Ascending aorta (tissue), 2 donors: ENCODE measurements at regions of chr2 and their contacts with region 1.

Region 1: DNA sequence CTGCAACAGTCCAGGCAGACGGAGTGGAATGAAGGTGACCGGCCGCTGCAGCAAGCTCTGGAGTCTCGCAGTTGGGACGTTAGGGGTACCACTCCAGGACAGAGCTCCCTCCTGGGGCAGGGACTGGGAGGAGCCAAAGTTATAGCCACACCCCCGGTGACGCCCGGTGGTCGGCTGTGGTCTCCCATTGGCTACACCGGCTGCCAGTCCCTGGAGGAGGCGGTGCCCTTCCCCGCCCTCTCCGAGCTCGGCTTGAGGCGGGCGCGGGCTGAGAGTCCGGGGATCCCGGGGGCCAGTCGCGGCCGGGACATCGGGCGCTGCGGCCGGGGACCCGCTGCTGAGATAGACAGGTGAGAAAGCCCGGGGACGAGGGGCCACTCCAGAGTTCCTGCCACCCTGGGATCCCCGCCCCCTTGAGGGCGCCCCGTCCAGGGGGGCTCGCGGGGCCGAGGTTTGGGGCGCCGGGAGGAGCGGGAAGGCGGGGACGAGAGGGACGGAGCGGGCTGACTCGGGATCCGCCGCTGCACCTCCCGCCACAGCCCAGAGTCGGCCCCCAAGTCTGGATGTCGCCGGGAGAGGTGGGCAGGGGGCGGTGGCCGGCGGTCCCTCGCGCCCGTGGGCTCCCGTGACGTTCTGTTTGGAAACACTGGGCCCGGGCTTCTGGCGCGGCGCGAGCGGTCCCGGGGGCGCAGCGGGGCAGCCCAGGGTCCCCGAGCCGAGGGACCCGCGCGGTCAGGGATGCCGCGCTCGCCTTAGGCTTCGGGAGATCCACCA is at the start of gene PLEKHH2:
- DNase-seq: peak; percentile 58 to 95
- H3K4me3 ChIP-seq: peak within 1 kb of the TSS; percentile 94 to 95
- H3K27ac ChIP-seq: peak within 1 kb of the TSS; percentile 74 to 88
- H3K4me1 ChIP-seq: peaks cover 0 to 4% of the 10 kb centered on the region in 2 donors
- H3K27me3 ChIP-seq: no peaks in the 10 kb centered on the region
- CTCF ChIP-seq: no peak
- total RNA-seq, gene PLEKHH2: 15.0 TPM

Region 2: GRCh38 chr2:42886921-42887320 is 750.3 kb before region 1 on chr2:
- intact Hi-C with region 1: no loop called
- DNase-seq: peak in 1 of 2 donors; percentile 62
- H3K4me3 ChIP-seq: no peak overlapping the region
- H3K27ac ChIP-seq: no peak overlapping the region
- H3K4me1 ChIP-seq: peaks cover 2 to 3% of the 10 kb centered on the region in 2 donors
- H3K27me3 ChIP-seq: no peaks in the 10 kb centered on the region
- CTCF ChIP-seq: no peak

Region 3: GRCh38 chr2:43595603-43596412 is 41.4 kb before region 1 on chr2 and contains the start of gene THADA:
- intact Hi-C with region 1: loop called (anchors 2 kb)
- DNase-seq: peak; percentile 97 to 99
- H3K4me3 ChIP-seq: peak within 1 kb of the TSS; percentile 78 to 87
- H3K27ac ChIP-seq: peak within 1 kb of the TSS; percentile 88 to 95
- H3K4me1 ChIP-seq: peaks cover 4 to 12% of the 10 kb centered on the region in 2 donors
- H3K27me3 ChIP-seq: no peaks in the 10 kb centered on the region
- CTCF ChIP-seq: no peak
- total RNA-seq, gene THADA: 27.4 TPM

Region 4: GRCh38 chr2:43773876-43774613 is 136.8 kb after region 1 on chr2 and contains the start of gene DYNC2LI1:
- intact Hi-C with region 1: loop called (anchors 5 kb)
- DNase-seq: peak; percentile 78 to 96
- H3K4me3 ChIP-seq: peak within 1 kb of the TSS; percentile 60 to 85
- H3K27ac ChIP-seq: peak within 1 kb of the TSS; percentile 82 to 87
- H3K4me1 ChIP-seq: no peaks in the 10 kb centered on the region
- H3K27me3 ChIP-seq: no peaks in the 10 kb centered on the region
- CTCF ChIP-seq: no peak
- total RNA-seq, gene DYNC2LI1: 2.9 TPM